ENCODE measurements at regions of chr16 and their contacts with region 1.

Region 1: DNA sequence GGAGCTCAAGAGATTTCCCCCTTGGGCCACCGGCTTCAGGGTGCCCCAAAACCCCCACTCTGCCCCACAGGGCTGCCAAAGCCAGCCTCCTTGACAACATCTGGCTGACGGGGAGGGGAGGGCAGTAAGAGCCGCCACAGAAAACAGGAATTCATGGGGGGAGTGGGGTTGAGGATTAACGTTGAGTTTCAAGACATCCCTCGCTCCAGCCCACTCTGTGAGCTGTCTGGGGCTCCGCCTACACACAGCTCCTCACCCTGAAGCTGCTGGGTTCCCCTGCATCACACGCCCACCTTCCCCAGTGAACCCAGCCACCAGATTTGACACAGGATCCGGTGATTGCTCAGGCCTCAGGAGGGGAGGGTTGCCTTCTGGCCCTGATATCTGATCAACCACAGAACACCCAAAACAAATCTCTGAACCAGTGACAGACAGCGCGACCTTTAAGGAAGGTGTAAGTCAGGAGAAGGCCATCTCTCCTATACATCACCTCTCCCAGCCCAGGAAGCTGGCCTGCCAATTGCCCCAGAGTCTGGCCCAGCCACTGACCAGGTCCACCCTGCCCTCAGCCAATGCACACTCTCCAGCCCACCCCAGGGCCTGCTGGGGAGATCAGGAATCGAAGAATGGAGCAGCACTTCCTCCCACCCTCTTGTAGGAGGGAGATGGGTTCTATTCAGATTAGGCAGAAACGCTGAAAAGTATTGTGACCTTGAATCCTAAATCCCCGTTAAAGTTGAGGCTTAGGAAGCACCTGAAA is 132.1 kb downstream of the CLEC16A start:
- DNase-seq: no peak
- ATAC-seq: peak; percentile 70
- H3K4me3 Mint-ChIP-seq: peak overlapping the region; percentile 51
- H3K27ac Mint-ChIP-seq: peak overlapping the region; percentile 95
- H3K4me1 Mint-ChIP-seq: peaks cover 83% of the 10 kb centered on the region
- H3K27me3 Mint-ChIP-seq: no peaks in the 10 kb centered on the region
- CTCF ChIP-seq: no peak

Region 2: DNA sequence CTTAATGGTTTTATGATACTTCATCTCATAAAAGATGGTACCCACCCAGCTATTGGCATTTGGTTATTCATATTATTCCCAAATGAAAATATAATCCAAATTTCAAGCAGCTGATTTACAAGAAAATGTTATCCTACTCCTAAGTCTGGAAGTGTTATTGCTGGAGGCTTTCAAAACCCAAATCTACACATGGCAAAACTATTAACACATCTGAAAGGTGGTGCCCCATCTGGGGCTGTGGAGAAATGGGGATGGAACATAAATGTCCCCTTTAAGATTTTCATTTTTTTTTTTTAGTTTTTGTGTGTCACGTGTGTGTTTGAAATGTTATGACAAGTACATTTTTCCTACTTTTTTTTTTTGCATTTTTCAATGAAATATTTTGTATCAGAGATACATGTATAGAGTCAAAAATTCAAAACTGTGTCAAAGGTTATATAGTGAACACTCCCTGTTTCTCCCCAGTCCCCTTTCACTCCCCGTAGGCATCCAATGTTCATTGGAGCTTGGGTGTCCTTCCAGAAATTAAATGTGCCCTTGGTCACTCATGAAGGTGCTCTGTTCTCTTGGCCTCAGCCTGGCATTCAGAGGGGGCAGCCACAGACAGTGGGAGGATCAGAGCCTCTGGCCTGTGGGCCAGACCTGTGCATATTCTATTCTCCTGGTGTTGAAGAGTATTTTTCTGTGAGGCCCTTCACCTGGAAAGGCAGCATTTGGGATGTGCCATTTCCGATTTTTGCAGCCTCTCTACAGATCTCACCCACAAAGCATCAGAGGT is 53.0 kb before region 1 on chr16:
- CTCF ChIA-PET with region 1: no interaction called
- POLR2A ChIA-PET with region 1: no interaction called
- intact Hi-C with region 1: no loop called
- DNase-seq: no peak
- ATAC-seq: no peak
- H3K4me3 Mint-ChIP-seq: no peak overlapping the region
- H3K27ac Mint-ChIP-seq: no peak overlapping the region
- H3K4me1 Mint-ChIP-seq: no peaks in the 10 kb centered on the region
- H3K27me3 Mint-ChIP-seq: no peaks in the 10 kb centered on the region
- CTCF ChIP-seq: no peak

Region 3: GRCh38 chr16:11051879-11052808 is 24.3 kb before region 1 on chr16:
- CTCF ChIA-PET with region 1: no interaction called
- POLR2A ChIA-PET with region 1: interaction called, 7 read pairs
- intact Hi-C with region 1: loop called (anchors 1 kb)
- DNase-seq: no peak
- ATAC-seq: peak; percentile 70
- H3K4me3 Mint-ChIP-seq: no peak overlapping the region
- H3K27ac Mint-ChIP-seq: peak overlapping the region; percentile 2
- H3K4me1 Mint-ChIP-seq: peaks cover 15% of the 10 kb centered on the region
- H3K27me3 Mint-ChIP-seq: no peaks in the 10 kb centered on the region
- CTCF ChIP-seq: no peak

Region 4: GRCh38 chr16:11094072-11094856 is 17.8 kb after region 1 on chr16:
- CTCF ChIA-PET with region 1: interaction called, 5 read pairs
- POLR2A ChIA-PET with region 1: interaction called, 82 read pairs
- intact Hi-C with region 1: loop called (anchors 1 kb)
- DNase-seq: no peak
- ATAC-seq: peak; percentile 67
- H3K4me3 Mint-ChIP-seq: peak overlapping the region; percentile 68
- H3K27ac Mint-ChIP-seq: peak overlapping the region; percentile 94
- H3K4me1 Mint-ChIP-seq: peaks cover 40% of the 10 kb centered on the region
- H3K27me3 Mint-ChIP-seq: no peaks in the 10 kb centered on the region
- CTCF ChIP-seq: no peak

Region 5: GRCh38 chr16:11181899-11182279 is 105.5 kb after region 1 on chr16:
- CTCF ChIA-PET with region 1: no interaction called
- POLR2A ChIA-PET with region 1: interaction called, 11 read pairs
- intact Hi-C with region 1: loop called (anchors 2 kb)
- DNase-seq: no peak
- ATAC-seq: peak; percentile 35
- H3K4me3 Mint-ChIP-seq: peak overlapping the region; percentile 64
- H3K27ac Mint-ChIP-seq: peak overlapping the region; percentile 87
- H3K4me1 Mint-ChIP-seq: peaks cover 58% of the 10 kb centered on the region
- H3K27me3 Mint-ChIP-seq: no peaks in the 10 kb centered on the region
- CTCF ChIP-seq: no peak

Region 6: DNA sequence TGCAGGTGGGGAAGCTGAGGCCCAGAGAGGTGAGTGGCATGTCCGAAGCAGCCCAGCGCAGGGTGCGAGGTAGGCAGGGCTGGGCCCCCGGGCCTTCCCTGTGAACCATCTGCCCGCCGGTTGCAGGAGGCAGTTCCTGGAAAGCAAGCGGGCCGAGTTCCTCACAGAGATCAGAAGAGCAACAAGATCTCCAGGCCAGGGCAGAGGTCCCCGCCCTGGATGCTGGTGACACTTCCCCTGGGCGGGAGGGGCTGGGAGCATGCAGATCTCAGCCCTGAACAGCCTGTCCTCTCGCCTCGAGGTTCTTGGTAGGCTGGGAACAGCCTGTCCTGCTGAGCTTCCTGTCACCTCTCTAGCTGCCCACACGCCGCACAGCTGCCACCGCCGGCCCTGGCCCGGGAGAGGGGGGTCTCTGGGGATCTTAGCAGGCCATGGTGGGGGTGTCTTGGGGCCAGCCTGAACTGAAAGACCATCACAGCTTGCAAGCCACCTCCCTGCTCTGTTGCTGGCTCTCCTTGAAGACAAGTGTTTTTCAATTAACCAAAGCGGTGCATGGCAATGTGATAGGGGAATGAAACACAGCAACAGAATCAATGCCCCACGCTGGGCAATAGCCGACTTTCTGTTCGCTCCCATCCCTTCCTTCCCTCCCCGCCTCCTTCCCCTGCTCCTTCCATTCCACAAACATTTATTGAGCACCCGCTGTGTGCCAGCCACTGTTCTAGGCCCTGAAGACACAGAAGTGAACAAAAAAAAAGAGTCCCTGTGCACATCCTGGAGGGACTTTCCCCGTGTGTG is 147.9 kb after region 1 on chr16:
- CTCF ChIA-PET with region 1: interaction called, 3 read pairs
- POLR2A ChIA-PET with region 1: interaction called, 11 read pairs
- intact Hi-C with region 1: loop called (anchors 1 kb)
- DNase-seq: peak; percentile 34
- ATAC-seq: peak; percentile 31
- H3K4me3 Mint-ChIP-seq: peak overlapping the region; percentile 69
- H3K27ac Mint-ChIP-seq: peak overlapping the region; percentile 83
- H3K4me1 Mint-ChIP-seq: peaks cover 37% of the 10 kb centered on the region
- H3K27me3 Mint-ChIP-seq: no peaks in the 10 kb centered on the region
- CTCF ChIP-seq: no peak

Region 7: GRCh38 chr16:11361701-11362451 is 285.4 kb after region 1 on chr16:
- CTCF ChIA-PET with region 1: no interaction called
- POLR2A ChIA-PET with region 1: no interaction called
- intact Hi-C with region 1: loop called (anchors 5 kb)
- DNase-seq: no peak
- ATAC-seq: peak; percentile 49
- H3K4me3 Mint-ChIP-seq: peak overlapping the region; percentile 67
- H3K27ac Mint-ChIP-seq: peak overlapping the region; percentile 16
- H3K4me1 Mint-ChIP-seq: peaks cover 55% of the 10 kb centered on the region
- H3K27me3 Mint-ChIP-seq: peaks cover 21% of the 10 kb centered on the region
- CTCF ChIP-seq: no peak

Region 8: GRCh38 chr16:11546608-11547061 is 470.2 kb after region 1 on chr16:
- CTCF ChIA-PET with region 1: no interaction called
- POLR2A ChIA-PET with region 1: no interaction called
- intact Hi-C with region 1: no loop called
- DNase-seq: no peak
- ATAC-seq: no peak
- H3K4me3 Mint-ChIP-seq: no peak overlapping the region
- H3K27ac Mint-ChIP-seq: peak overlapping the region; percentile 3
- H3K4me1 Mint-ChIP-seq: no peaks in the 10 kb centered on the region
- H3K27me3 Mint-ChIP-seq: no peaks in the 10 kb centered on the region
- CTCF ChIP-seq: no peak

Measured in activated B cell treated with CpG ODN at 0.5 μM for 24 hours (primary cell).